ENCODE measurements at regions of chr5 and their contacts with region 1.

Region 1: DNA sequence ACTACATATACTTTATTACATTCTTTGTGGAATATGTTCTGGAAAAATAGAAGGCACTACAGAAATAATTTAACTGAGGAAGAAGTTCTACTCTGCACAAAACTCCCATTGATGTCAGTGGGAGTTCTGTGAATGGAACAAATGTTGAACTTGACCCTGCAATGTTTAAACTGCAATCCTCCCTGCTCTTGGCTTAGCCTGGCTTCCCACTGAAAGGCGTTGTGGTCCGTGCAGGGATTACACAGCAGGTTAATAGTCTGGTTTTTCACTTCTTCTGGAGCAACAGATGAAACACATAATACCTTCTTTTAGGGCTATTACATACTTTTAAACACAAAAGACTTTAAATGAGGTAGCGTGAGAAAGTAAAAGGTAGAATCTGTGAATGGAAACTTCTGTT is 12.9 kb upstream of the ERBIN start:
- DNase-seq: no peak
- ATAC-seq: no peak
- H3K4me3 ChIP-seq: no peak overlapping the region
- H3K4me3 Mint-ChIP-seq: no peak overlapping the region
- H3K27ac ChIP-seq: no peak overlapping the region
- H3K27ac Mint-ChIP-seq: no peak overlapping the region
- H3K4me1 ChIP-seq: no peaks in the 10 kb centered on the region
- H3K4me1 Mint-ChIP-seq: peaks cover 0 to 15% (median 8%) of the 10 kb centered on the region in 7 donors
- H3K27me3 ChIP-seq: no peaks in the 10 kb centered on the region
- H3K27me3 Mint-ChIP-seq: peaks cover 0 to 2% (median 0%) of the 10 kb centered on the region in 5 donors

Region 2: GRCh38 chr5:65876496-65876895 is 37.0 kb before region 1 on chr5:
- CTCF ChIA-PET with region 1: no interaction called
- POLR2A ChIA-PET with region 1: no interaction called
- intact Hi-C with region 1: loop called in 1 of 2 experiments (anchors 5 kb)
- DNase-seq: no peak
- ATAC-seq: no peak
- H3K4me3 ChIP-seq: no peak overlapping the region
- H3K4me3 Mint-ChIP-seq: no peak overlapping the region
- H3K27ac ChIP-seq: no peak overlapping the region
- H3K27ac Mint-ChIP-seq: no peak overlapping the region
- H3K4me1 ChIP-seq: no peaks in the 10 kb centered on the region
- H3K4me1 Mint-ChIP-seq: peaks cover 0 to 7% (median 0%) of the 10 kb centered on the region in 7 donors
- H3K27me3 ChIP-seq: no peaks in the 10 kb centered on the region
- H3K27me3 Mint-ChIP-seq: no peaks in the 10 kb centered on the region

Region 3: DNA sequence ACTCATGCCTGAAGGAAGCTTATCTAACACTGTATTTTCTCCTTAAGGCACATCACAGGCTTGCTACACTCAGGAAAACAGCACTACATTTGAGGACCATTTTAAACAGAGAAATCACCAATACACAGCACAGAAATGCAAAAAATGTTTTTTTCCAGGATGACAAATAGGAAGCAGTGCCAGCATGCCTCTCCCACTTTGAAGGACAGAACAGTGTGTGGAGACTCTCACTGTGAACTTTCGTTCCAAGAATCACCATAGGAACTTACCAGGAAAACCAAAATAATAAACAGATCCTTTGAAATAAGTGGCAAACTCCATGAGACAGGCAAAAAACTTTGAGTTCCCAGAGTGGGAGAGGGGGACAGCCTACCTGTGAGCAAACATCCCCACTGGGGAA is 464.9 kb after region 1 on chr5:
- CTCF ChIA-PET with region 1: no interaction called
- POLR2A ChIA-PET with region 1: no interaction called
- intact Hi-C with region 1: no loop called
- DNase-seq: no peak
- ATAC-seq: no peak
- H3K4me3 ChIP-seq: no peak overlapping the region
- H3K4me3 Mint-ChIP-seq: no peak overlapping the region
- H3K27ac ChIP-seq: no peak overlapping the region
- H3K27ac Mint-ChIP-seq: no peak overlapping the region
- H3K4me1 ChIP-seq: no peaks in the 10 kb centered on the region
- H3K4me1 Mint-ChIP-seq: no peaks in the 10 kb centered on the region
- H3K27me3 ChIP-seq: peaks cover 0 to 3% of the 10 kb centered on the region in 2 donors
- H3K27me3 Mint-ChIP-seq: peaks cover 9 to 34% (median 19%) of the 10 kb centered on the region in 5 donors

Measured in naive thymus-derived CD4-positive, alpha-beta T cell (primary cell).